ENCODE measurements at regions of chr4 and their contacts with region 1.

Region 1: GRCh38 chr4:78079726-78080430 is 22.8 kb downstream of the FRAS1 start:
- DNase-seq: no peak
- H3K4me3 Mint-ChIP-seq: no peak overlapping the region
- H3K27ac Mint-ChIP-seq: no peak overlapping the region
- H3K4me1 Mint-ChIP-seq: no peaks in the 10 kb centered on the region
- H3K27me3 Mint-ChIP-seq: no peaks in the 10 kb centered on the region
- CTCF ChIP-seq: no peak

Region 2: DNA sequence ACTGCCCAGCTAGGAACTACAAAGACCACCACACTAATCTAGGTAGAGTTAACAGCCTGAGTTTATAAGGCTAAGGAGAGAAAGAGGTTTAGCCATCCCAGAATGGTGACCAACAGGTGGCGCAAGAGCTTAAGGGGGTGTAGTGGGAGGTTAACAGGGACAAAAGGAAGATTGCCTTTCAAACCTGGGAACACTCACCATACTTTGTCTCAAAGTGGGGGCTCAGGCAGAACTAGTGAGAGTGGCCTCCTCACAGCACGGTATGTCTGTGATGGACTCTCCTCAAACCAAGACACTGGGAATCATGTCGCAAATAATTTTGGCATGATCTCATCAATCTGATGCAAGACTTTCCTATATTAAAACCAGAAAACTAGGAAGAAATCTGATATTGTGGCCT is 1027.5 kb before region 1 on chr4:
- CTCF ChIA-PET with region 1: interaction called, 13 read pairs
- intact Hi-C with region 1: no loop called
- DNase-seq: peak; percentile 71
- H3K4me3 Mint-ChIP-seq: no peak overlapping the region
- H3K27ac Mint-ChIP-seq: no peak overlapping the region
- H3K4me1 Mint-ChIP-seq: no peaks in the 10 kb centered on the region
- H3K27me3 Mint-ChIP-seq: no peaks in the 10 kb centered on the region
- CTCF ChIP-seq: peak; percentile 43